BJ (cell line): ENCODE measurements at regions of chr15 and their contacts with region 1.

Region 1: DNA sequence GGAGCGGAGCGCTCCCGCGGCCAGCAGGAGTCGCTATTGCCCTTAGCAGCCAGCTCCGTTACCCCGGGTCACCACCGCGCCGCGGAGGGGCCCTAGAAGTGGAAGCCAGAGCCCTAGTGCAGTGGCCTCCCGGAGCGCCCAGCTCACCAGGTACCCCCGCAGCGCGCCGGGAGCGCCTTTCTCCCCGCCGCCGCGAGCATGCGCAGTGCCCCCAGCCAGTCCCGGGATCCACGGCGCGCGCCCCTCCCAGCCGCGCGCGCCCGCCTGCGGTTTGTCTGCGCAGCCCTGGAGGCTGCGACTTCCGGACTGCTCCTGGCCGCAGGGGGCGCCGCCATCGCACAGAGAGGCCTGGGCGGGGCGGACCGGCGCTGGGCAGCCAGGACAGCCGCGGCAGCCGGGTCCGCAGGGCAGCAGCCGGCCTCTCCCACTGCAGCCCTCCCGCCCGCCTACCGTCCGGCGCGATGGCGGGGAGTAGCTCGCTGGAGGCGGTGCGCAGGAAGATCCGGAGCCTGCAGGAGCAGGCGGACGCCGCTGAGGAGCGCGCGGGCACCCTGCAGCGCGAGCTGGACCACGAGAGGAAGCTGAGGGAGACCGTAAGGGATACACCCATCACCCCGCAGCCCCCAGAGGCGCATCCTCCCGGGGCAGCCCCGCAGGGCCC is 5.7 kb downstream of the TPM1 start:
- DNase-seq: no peak
- H3K4me3 ChIP-seq: peak overlapping the region; percentile 49
- H3K27me3 ChIP-seq: no peaks in the 10 kb centered on the region
- CTCF ChIP-seq: peak; percentile 94

Region 2: GRCh38 chr15:62868507-62868906 is 179.7 kb before region 1 on chr15:
- CTCF ChIA-PET with region 1: interaction called, 11 read pairs
- POLR2A ChIA-PET with region 1: interaction called, 11 read pairs
- DNase-seq: peak; percentile 93
- H3K4me3 ChIP-seq: no peak overlapping the region
- H3K27me3 ChIP-seq: no peaks in the 10 kb centered on the region
- CTCF ChIP-seq: no peak

Region 3: DNA sequence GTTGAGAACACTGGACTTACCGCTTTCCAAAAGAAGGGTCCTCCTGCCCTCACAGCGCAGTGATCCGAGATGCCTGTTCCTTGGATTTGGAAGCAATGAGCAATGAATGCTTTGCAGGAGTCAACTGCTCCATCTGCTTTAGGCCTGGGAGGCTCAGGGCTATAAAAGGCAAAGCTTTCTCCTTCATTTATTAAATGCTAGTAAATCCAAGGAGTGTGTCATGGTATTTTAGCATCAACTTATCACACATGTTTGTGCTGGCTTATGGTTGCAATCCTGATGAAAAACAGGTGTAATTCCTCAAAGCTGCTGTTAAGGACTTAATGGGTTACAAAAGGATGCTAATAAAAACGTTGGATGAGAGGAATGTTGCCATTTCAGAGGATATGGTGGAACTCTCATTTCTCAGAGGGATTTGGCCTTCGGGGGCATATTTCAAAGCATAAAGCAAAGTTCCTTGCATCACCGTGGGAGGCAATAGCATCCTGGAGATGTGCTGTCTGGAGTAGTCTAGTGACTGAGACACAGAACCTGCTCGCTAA is 164.2 kb before region 1 on chr15:
- CTCF ChIA-PET with region 1: interaction called, 21 read pairs
- POLR2A ChIA-PET with region 1: interaction called, 8 read pairs
- DNase-seq: peak; percentile 99
- H3K4me3 ChIP-seq: no peak overlapping the region
- H3K27me3 ChIP-seq: no peaks in the 10 kb centered on the region
- CTCF ChIP-seq: peak; percentile 51

Region 4: GRCh38 chr15:63023351-63023945 is 24.8 kb before region 1 on chr15:
- CTCF ChIA-PET with region 1: interaction called, 10 read pairs
- POLR2A ChIA-PET with region 1: interaction called, 7 read pairs
- DNase-seq: peak; percentile 82
- H3K4me3 ChIP-seq: no peak overlapping the region
- H3K27me3 ChIP-seq: no peaks in the 10 kb centered on the region
- CTCF ChIP-seq: no peak

Region 5: DNA sequence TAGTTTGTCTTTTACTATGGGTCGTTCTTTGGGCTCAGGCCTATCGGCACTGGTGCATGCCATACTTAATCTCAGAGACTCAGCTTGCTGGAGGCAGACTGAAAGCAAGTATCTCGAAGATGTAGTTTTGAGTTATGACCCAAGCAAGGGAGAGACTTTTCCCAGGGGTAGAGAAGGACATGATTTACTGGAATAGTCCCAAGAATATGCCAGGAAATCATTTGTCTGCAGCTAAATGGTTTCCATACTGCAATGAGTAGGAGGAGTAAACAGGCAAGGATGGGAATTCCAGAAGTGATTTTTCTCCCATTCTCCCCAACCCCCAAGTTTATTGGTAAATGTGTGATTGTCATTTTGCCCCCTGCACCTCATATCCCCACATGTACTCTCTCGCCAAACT is 38.0 kb after region 1 on chr15:
- CTCF ChIA-PET with region 1: interaction called, 17 read pairs
- POLR2A ChIA-PET with region 1: interaction called, 4 read pairs
- DNase-seq: no peak
- H3K4me3 ChIP-seq: no peak overlapping the region
- H3K27me3 ChIP-seq: no peaks in the 10 kb centered on the region
- CTCF ChIP-seq: no peak

Region 6: DNA sequence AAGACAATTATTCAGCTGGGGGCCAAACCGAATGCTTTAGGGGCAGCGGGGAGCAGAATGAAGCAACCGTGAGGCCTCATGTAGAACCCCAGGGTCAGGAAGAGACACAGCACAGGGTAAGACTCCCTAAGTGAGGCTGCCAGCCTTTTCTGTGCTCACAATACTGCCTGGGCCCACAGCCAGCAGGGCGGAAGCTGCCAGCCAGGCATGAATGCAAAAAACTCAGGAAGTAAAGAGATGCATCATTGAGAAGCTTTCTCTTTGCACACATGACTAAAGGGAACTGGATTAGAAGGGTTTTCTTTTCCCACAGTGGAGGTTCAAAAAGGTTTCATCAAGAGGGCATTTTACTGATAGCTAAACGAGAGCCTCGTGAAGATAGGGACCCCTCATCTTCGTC is 300.1 kb after region 1 on chr15:
- CTCF ChIA-PET with region 1: no interaction called
- POLR2A ChIA-PET with region 1: no interaction called
- DNase-seq: no peak
- H3K4me3 ChIP-seq: no peak overlapping the region
- H3K27me3 ChIP-seq: no peaks in the 10 kb centered on the region
- CTCF ChIP-seq: no peak